ENCODE measurements at regions of chr1 and their contacts with region 1.

Region 1: GRCh38 chr1:94971491-94971924 is 44.6 kb upstream of the CNN3 start:
- DNase-seq: no peak
- ATAC-seq: no peak
- H3K4me3 Mint-ChIP-seq: no peak overlapping the region
- H3K27ac Mint-ChIP-seq: no peak overlapping the region
- H3K4me1 Mint-ChIP-seq: no peaks in the 10 kb centered on the region
- H3K27me3 Mint-ChIP-seq: no peaks in the 10 kb centered on the region
- CTCF ChIP-seq: no peak

Region 2: DNA sequence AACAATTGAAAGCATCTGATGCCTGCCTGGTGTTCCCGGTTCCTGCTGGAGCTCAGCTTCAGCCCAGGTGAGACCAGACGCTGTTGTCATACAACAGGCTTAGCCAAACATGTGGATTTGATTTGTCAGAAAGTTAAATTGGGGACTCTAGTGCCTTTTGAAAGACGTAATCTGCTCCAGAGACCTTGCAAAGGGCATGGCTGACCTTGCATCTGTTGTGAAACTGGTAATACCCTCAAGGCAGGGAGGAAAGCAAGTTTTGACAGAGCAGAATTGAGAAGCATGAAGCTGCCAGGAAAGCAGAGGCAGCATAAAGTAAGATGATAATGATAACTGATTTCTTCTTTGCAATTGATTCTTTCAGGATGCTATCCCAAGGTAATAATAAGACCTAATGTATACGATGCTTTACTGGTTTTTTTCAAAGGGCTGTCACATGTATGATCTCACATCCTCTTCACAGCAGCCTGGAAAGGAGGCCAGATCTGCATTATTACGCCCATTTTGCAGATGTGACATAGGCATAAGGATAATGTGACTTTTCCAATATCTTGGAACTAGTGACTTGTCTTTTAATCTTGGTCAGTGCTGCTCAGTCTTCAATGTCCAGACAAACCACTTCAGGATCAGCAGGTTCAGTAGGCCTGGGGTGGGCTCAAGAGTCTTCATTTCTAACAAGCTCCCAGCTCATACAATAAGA is 19.8 kb before region 1 on chr1:
- CTCF ChIA-PET with region 1: no interaction called
- POLR2A ChIA-PET with region 1: no interaction called
- intact Hi-C with region 1: loop called (anchors 1 kb)
- DNase-seq: no peak
- ATAC-seq: no peak
- H3K4me3 Mint-ChIP-seq: no peak overlapping the region
- H3K27ac Mint-ChIP-seq: no peak overlapping the region
- H3K4me1 Mint-ChIP-seq: no peaks in the 10 kb centered on the region
- H3K27me3 Mint-ChIP-seq: no peaks in the 10 kb centered on the region
- CTCF ChIP-seq: no peak

Region 3: GRCh38 chr1:95035536-95035935 is 64.0 kb after region 1 on chr1:
- CTCF ChIA-PET with region 1: no interaction called
- POLR2A ChIA-PET with region 1: no interaction called
- intact Hi-C with region 1: no loop called
- DNase-seq: no peak
- ATAC-seq: no peak
- H3K4me3 Mint-ChIP-seq: no peak overlapping the region
- H3K27ac Mint-ChIP-seq: no peak overlapping the region
- H3K4me1 Mint-ChIP-seq: no peaks in the 10 kb centered on the region
- H3K27me3 Mint-ChIP-seq: no peaks in the 10 kb centered on the region
- CTCF ChIP-seq: no peak

Region 4: GRCh38 chr1:96790599-96790998 is 1819.1 kb after region 1 on chr1:
- CTCF ChIA-PET with region 1: no interaction called
- POLR2A ChIA-PET with region 1: no interaction called
- intact Hi-C with region 1: no loop called
- DNase-seq: no peak
- ATAC-seq: no peak
- H3K4me3 Mint-ChIP-seq: no peak overlapping the region
- H3K27ac Mint-ChIP-seq: no peak overlapping the region
- H3K4me1 Mint-ChIP-seq: no peaks in the 10 kb centered on the region
- H3K27me3 Mint-ChIP-seq: no peaks in the 10 kb centered on the region
- CTCF ChIP-seq: no peak

Measured in activated B cell treated with CpG ODN at 0.5 μM for 24 hours (primary cell).